ENCODE measurements at regions of chr17 and their contacts with region 1.

Region 1: DNA sequence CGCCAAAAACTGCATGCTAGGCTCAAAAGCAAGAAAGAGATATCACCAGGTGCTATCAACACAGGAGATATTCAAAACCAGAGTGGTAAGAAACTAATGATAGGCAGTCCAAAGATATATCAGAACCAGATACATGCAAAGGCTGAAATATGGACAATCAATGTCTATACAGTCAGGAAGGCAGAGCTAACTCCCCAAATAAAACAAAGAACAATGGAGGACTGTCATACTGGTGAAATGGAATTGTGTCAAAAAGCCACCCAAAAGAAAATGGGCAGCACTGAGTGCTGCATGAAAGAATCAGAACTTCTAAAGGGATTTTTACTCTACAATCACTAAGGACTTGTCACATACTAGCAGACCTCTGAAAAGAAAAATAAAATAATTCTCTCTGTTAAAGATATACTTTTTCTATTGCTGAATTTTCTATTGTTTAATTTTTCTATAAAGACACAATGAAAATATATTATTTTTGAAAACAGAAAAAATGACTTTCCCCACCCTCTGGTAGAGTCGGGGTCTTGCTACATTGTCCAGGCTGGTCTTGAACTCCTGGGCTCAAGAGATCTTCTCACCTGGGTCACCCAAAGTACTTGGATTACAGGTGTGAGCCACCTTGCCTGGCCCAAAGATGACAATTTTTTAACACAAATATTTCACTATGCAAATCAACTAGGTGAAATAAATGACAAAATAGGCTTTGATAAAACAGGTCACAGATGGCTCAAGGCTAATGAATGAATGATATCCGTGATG is 98.2 kb downstream of the USP32 start:
- DNase-seq: no peak
- H3K4me3 ChIP-seq: no peak overlapping the region
- H3K27ac ChIP-seq: no peak overlapping the region
- H3K4me1 ChIP-seq: peaks cover 0 to 6% (median 0%) of the 10 kb centered on the region in 4 donors
- H3K27me3 ChIP-seq: no peaks in the 10 kb centered on the region
- CTCF ChIP-seq: no peak
- EP300 ChIP-seq: no peak
- POLR2A ChIP-seq: no peak

Region 2: DNA sequence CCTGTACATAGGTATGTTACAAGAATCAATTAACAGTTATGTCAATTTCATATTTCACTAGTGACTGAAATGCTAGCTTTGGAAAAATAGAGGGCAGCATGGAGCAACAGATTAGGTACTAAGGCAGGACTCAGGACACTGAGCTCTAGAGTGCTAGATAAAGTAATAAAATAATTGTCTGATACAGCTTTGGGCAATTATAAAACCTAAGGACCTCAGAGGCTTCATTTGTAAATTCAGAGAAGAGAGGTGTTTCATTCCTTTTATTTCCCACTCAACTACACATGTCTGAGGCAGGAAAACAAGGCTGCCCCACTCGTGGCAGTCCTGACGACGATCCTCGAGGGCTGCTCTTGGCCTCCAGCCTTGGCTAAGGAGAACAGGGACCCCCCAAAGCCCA is 62.5 kb before region 1 on chr17:
- in situ Hi-C with region 1: no loop called
- intact Hi-C with region 1: no loop called
- DNase-seq: no peak
- H3K4me3 ChIP-seq: no peak overlapping the region
- H3K27ac ChIP-seq: no peak overlapping the region
- H3K4me1 ChIP-seq: no peaks in the 10 kb centered on the region
- H3K27me3 ChIP-seq: no peaks in the 10 kb centered on the region
- CTCF ChIP-seq: peak; percentile 23 to 42 (median 30)
- EP300 ChIP-seq: no peak
- POLR2A ChIP-seq: no peak

Region 3: DNA sequence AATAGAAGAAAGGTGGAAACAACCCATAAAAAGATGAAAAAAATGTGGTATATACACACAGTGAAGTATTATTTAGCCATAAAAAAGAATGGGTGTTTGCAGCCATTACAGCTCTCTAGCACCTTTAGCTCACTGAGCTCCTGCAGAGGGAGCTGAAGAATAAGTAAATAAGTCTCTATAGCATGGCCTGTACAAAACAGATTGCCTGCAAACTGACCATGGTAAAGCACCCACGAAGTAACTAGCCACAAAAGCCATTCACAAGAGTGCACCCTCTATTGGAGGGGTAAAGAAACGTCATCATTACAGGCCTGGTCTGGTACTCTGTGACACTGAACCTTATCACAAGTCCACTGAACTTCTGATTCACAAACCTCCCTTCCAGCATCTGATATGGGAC is 21.9 kb after region 1 on chr17:
- in situ Hi-C with region 1: no loop called
- intact Hi-C with region 1: loop called (anchors 1 kb)
- DNase-seq: no peak
- H3K4me3 ChIP-seq: no peak overlapping the region
- H3K27ac ChIP-seq: no peak overlapping the region
- H3K4me1 ChIP-seq: peaks cover 0 to 7% (median 2%) of the 10 kb centered on the region in 4 donors
- H3K27me3 ChIP-seq: no peaks in the 10 kb centered on the region
- CTCF ChIP-seq: no peak
- EP300 ChIP-seq: no peak
- POLR2A ChIP-seq: no peak

Region 4: DNA sequence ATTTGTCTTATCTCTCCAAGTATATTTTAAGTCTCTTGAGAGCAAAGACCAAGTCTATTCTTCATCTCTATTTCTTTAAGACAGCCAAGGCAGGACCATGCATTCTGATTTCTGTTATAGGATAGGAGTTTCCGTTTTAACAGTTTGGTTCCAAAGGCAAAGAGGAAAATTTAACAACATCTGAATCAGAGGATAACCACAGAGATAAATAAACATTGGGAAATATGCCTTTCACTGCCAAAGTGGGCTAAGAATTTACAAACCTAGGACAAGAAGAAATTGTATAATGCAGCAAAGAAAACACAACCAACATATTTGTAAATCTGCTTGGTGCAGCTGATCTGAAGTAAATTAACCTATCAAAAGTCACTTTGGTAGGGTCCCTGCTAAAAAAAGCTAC is 60.5 kb after region 1 on chr17:
- in situ Hi-C with region 1: no loop called
- intact Hi-C with region 1: no loop called
- DNase-seq: no peak
- H3K4me3 ChIP-seq: no peak overlapping the region
- H3K27ac ChIP-seq: no peak overlapping the region
- H3K4me1 ChIP-seq: peaks cover 0 to 36% (median 12%) of the 10 kb centered on the region in 4 donors
- H3K27me3 ChIP-seq: no peaks in the 10 kb centered on the region
- CTCF ChIP-seq: no peak
- EP300 ChIP-seq: no peak
- POLR2A ChIP-seq: no peak

Region 5: DNA sequence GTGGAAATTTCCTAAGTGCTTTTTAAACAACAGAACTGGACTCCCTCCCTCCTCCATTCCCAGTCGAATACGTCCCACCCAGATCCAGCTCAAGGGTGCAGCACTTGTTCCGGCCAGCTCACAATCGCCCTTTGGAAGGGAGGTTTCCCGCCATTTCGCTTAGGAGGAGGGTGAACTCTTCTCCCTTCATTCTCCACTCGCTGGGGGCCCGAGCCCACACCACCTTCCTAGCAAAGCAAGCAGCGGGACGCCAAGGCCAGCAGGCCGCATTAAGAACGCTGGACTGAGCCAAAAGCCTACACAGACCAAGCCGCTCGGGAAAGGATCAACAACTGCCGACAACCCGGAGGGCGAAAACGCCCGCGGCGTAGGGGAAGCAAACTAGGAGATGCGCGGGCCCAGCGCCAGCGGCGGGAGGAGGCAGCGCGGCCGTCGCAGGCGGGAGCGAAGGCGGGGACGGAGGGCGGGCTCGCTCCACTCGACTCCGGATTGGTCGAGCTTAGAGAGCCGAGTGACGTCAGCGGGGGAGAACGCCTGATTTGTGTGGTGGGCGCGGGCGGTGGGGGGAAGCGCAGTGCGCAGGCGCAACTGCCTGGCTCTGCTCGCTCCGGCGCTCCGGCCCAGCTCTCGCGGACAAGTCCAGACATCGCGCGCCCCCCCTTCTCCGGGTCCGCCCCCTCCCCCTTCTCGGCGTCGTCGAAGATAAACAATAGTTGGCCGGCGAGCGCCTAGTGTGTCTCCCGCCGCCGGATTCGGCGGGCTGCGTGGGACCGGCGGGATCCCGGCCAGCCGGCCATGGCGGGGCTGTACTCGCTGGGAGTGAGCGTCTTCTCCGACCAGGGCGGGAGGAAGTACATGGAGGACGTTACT is 306.1 kb after region 1 on chr17 and contains the start of gene PPM1D:
- in situ Hi-C with region 1: no loop called
- intact Hi-C with region 1: no loop called
- DNase-seq: peak; percentile 99
- H3K4me3 ChIP-seq: peak within 1 kb of the TSS; percentile 79 to 94 (median 89)
- H3K27ac ChIP-seq: peak within 1 kb of the TSS; percentile 95 to 98 (median 98)
- H3K4me1 ChIP-seq: peaks cover 6 to 31% (median 13%) of the 10 kb centered on the region in 4 donors
- H3K27me3 ChIP-seq: no peaks in the 10 kb centered on the region
- CTCF ChIP-seq: peak in 3 of 5 experiments; percentile 20 to 66 (median 58)
- EP300 ChIP-seq: no peak
- POLR2A ChIP-seq: peak; percentile 93
- total RNA-seq, gene PPM1D: 4.6 to 25.8 (median 16.0) TPM